A673 (cell line): ENCODE measurements at regions of chrX and their contacts with region 1.

Region 1: GRCh38 chrX:5891378-5891777 is 337.3 kb downstream of the NLGN4X start:
- DNase-seq: no peak
- H3K4me3 ChIP-seq: no peak overlapping the region
- H3K27ac ChIP-seq: no peak overlapping the region
- H3K4me1 ChIP-seq: no peaks in the 10 kb centered on the region
- H3K27me3 ChIP-seq: no peaks in the 10 kb centered on the region
- CTCF ChIP-seq: no peak

Region 2: DNA sequence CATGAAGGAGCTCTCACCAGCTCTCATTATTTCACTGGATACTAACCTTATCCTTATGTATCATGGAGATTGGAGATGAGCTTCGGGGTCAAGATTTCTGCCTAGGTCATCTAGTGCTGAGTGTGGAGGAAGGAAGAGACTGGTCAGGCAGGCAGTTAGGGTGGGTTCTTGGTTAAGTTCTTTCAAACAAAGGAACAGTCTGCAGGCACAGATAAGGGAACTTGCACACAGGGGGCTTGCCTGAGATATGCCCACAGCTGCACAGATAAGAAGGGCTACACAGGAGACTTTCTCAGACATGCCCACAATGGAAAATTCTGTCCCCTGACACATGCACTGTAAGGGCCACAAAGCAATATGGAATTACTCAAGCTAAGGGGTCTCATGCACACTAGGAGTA is 566.8 kb before region 1 on chrX:
- CTCF ChIA-PET with region 1: no interaction called
- POLR2A ChIA-PET with region 1: no interaction called
- intact Hi-C with region 1: no loop called
- DNase-seq: no peak
- H3K4me3 ChIP-seq: no peak overlapping the region
- H3K27ac ChIP-seq: no peak overlapping the region
- H3K4me1 ChIP-seq: no peaks in the 10 kb centered on the region
- H3K27me3 ChIP-seq: no peaks in the 10 kb centered on the region
- CTCF ChIP-seq: no peak

Region 3: DNA sequence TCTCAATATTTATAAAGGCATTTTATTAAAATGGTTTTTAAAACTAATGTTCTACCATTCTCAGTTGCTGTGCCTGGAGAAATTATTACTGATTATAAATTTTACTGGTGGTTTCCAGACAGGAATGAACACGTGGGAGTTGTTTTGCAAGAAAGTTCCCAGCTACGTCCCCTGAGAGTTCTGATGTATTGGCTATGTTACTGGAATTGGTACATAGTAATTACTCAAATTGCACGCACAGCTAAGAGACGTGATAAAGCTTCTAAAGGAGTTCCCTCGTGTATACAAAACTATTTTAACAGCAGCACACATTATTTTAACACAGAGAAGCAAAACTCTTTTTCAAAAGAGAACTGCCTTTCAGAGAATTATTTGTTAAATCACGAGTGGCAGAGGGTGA is 45.1 kb after region 1 on chrX:
- CTCF ChIA-PET with region 1: interaction called, 3 read pairs
- POLR2A ChIA-PET with region 1: no interaction called
- intact Hi-C with region 1: loop called (anchors 5 kb)
- DNase-seq: peak; percentile 80
- H3K4me3 ChIP-seq: no peak overlapping the region
- H3K27ac ChIP-seq: peak overlapping the region; percentile 59
- H3K4me1 ChIP-seq: peaks cover 15% of the 10 kb centered on the region
- H3K27me3 ChIP-seq: no peaks in the 10 kb centered on the region
- CTCF ChIP-seq: no peak

Region 4: GRCh38 chrX:7201496-7201895 is 1310.1 kb after region 1 on chrX:
- CTCF ChIA-PET with region 1: no interaction called
- POLR2A ChIA-PET with region 1: no interaction called
- intact Hi-C with region 1: no loop called
- DNase-seq: no peak
- H3K4me3 ChIP-seq: no peak overlapping the region
- H3K27ac ChIP-seq: no peak overlapping the region
- H3K4me1 ChIP-seq: no peaks in the 10 kb centered on the region
- H3K27me3 ChIP-seq: no peaks in the 10 kb centered on the region
- CTCF ChIP-seq: no peak